ENCODE measurements at regions of chr15 and their contacts with region 1.

Region 1: DNA sequence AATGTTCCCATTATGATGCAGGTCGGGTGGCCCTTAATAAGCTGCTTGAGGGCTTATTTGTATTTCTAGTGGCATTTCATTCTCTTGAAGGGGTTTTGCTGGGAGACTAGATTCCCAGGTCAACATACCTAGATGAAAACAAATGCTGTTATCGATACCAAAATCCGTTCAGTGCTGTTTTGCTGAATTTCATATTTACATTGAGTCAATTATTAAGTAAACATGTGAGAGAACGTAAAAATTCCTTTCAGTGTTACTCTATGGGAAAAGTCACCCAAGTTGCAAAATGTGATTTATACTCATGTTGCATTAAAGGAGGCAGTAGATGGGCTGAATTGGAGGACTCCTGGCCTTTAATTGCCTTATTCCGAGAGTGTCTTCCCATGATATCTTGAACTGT is 1011.3 kb upstream of the NR2F2 start:
- DNase-seq: no peak
- ATAC-seq: no peak
- H3K4me3 ChIP-seq: no peak overlapping the region
- H3K27ac ChIP-seq: no peak overlapping the region
- H3K4me1 ChIP-seq: no peaks in the 10 kb centered on the region
- H3K27me3 ChIP-seq: no peaks in the 10 kb centered on the region
- CTCF ChIP-seq: no peak
- EP300 ChIP-seq: no peak
- POLR2A ChIP-seq: no peak
- RAD21 ChIP-seq: no peak

Region 2: GRCh38 chr15:95277266-95277665 is 41.9 kb before region 1 on chr15:
- CTCF ChIA-PET with region 1: no interaction called
- POLR2A ChIA-PET with region 1: no interaction called
- RAD21 ChIA-PET with region 1: no interaction called
- SMC1A ChIA-PET with region 1: no interaction called
- in situ Hi-C with region 1: no loop called
- intact Hi-C with region 1: no loop called
- DNase-seq: no peak
- ATAC-seq: no peak
- H3K4me3 ChIP-seq: no peak overlapping the region
- H3K27ac ChIP-seq: no peak overlapping the region
- H3K4me1 ChIP-seq: no peaks in the 10 kb centered on the region
- H3K27me3 ChIP-seq: no peaks in the 10 kb centered on the region
- CTCF ChIP-seq: no peak
- EP300 ChIP-seq: no peak
- POLR2A ChIP-seq: no peak
- RAD21 ChIP-seq: no peak

Region 3: DNA sequence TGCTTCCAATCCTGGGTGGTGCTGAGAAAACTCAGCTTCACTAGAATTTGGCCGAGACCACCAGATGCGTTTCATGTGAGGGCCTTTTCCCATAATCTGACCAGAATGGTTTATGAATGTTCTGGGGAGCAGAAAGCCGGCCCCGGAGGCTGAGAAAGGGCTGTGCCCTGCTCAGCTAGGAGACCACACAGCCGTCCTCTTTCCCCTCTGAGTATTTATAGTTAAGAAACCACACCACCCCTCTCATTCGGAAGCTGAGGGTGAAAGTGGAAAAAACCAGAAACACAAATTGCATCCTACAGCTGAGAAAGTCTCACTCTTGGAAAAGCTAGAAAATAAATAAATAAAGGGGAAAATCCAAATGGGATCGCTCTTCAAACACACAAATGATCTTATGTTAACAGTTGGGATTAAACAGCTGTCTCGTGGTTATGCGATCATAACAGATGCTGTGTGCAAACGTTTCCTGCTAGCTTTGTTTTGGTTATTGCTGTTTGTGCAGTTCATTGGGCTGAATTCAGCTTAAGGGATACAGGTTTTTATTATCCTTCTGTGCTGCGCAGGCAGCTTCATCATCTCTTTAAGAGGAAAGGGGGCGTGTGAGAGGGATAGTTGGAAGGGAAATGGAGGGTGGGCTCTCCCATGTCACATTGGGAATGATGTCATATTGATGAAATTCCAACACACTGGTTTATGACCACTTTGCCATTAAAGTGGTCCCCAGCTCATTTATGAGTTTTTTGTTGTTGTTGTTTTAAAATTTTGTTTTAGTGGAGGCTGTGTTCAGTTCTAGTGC is 14.8 kb before region 1 on chr15:
- CTCF ChIA-PET with region 1: interaction called, 3 read pairs
- POLR2A ChIA-PET with region 1: no interaction called
- RAD21 ChIA-PET with region 1: interaction called, 9 read pairs
- SMC1A ChIA-PET with region 1: interaction called, 18 read pairs
- in situ Hi-C with region 1: no loop called
- intact Hi-C with region 1: no loop called
- DNase-seq: no peak
- ATAC-seq: peak; percentile 67
- H3K4me3 ChIP-seq: no peak overlapping the region
- H3K27ac ChIP-seq: no peak overlapping the region
- H3K4me1 ChIP-seq: no peaks in the 10 kb centered on the region
- H3K27me3 ChIP-seq: no peaks in the 10 kb centered on the region
- CTCF ChIP-seq: no peak
- EP300 ChIP-seq: no peak
- POLR2A ChIP-seq: no peak
- RAD21 ChIP-seq: no peak